Activated T-helper 1 cell treated with anti-CD3 and anti-CD28 coated beads, Interleukin-12 subunit alpha, Interleukin-12 subunit beta, Interleukin-2, Interleukin-4 antibody, amounts not matched to agents 30 ng/mL and 10 ng/mL and 1 ng/mL, durations not matched to agents 14 hours and 24 hours and 36 hours (primary cell): ENCODE measurements at regions of chr3 and their contacts with region 1.

Region 1: GRCh38 chr3:49906004-49906743 is 2.5 kb upstream of the MST1R start:
- DNase-seq: peak; percentile 29
- H3K4me3 Mint-ChIP-seq: peak overlapping the region; percentile 16
- H3K27ac Mint-ChIP-seq: peak overlapping the region; percentile 57
- H3K4me1 Mint-ChIP-seq: peaks cover 32% of the 10 kb centered on the region
- H3K27me3 Mint-ChIP-seq: no peaks in the 10 kb centered on the region

Region 2: DNA sequence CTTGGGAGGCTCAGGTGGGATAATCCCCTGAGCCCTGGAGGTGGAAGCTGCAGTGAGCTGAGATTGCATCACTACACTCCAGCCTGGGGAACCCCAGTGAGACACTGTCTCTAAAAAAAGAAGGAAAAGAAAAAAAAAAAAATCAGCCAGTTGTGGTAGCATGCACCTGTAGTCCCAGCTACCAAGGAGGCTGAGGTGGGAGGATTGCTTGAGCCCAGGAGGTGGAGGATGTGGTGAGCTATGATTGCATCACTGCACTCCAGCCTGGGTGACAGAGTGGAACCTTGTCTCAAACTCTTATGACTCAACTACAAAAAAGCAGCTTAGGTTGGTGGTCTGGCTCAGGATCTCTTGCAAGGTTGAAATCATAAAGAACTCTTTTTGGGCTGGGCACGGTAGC is 528.7 kb before region 1 on chr3:
- intact Hi-C with region 1: no loop called
- DNase-seq: peak; percentile 49
- H3K4me3 Mint-ChIP-seq: peak overlapping the region; percentile 19
- H3K27ac Mint-ChIP-seq: peak overlapping the region; percentile 82
- H3K4me1 Mint-ChIP-seq: peaks cover 16% of the 10 kb centered on the region
- H3K27me3 Mint-ChIP-seq: no peaks in the 10 kb centered on the region

Region 3: GRCh38 chr3:49703443-49703927 is 202.7 kb before region 1 on chr3:
- intact Hi-C with region 1: loop called (anchors 1 kb)
- DNase-seq: peak; percentile 57
- H3K4me3 Mint-ChIP-seq: no peak overlapping the region
- H3K27ac Mint-ChIP-seq: no peak overlapping the region
- H3K4me1 Mint-ChIP-seq: no peaks in the 10 kb centered on the region
- H3K27me3 Mint-ChIP-seq: no peaks in the 10 kb centered on the region

Region 4: GRCh38 chr3:49723628-49724551 is 182.3 kb before region 1 on chr3 and contains the start of gene GMPPB:
- intact Hi-C with region 1: no loop called
- DNase-seq: peak; percentile 95
- H3K4me3 Mint-ChIP-seq: peak within 1 kb of the TSS; percentile 95
- H3K27ac Mint-ChIP-seq: peak within 1 kb of the TSS; percentile 95
- H3K4me1 Mint-ChIP-seq: peaks cover 34% of the 10 kb centered on the region
- H3K27me3 Mint-ChIP-seq: no peaks in the 10 kb centered on the region
- total RNA-seq, gene GMPPB: 49.1 and 49.2 TPM in 2 replicates

Region 5: GRCh38 chr3:49929331-49930240 is 23.4 kb after region 1 on chr3 and contains the start of gene MON1A:
- intact Hi-C with region 1: loop called (anchors 1 kb)
- DNase-seq: peak; percentile 88
- H3K4me3 Mint-ChIP-seq: peak within 1 kb of the TSS; percentile 90
- H3K27ac Mint-ChIP-seq: peak within 1 kb of the TSS; percentile 81
- H3K4me1 Mint-ChIP-seq: peaks cover 21% of the 10 kb centered on the region
- H3K27me3 Mint-ChIP-seq: no peaks in the 10 kb centered on the region
- total RNA-seq, gene MON1A: 15.5 and 17.3 TPM in 2 replicates